Colonic mucosa (tissue), 4 donors: ENCODE measurements at regions of chr4 and their contacts with region 1.

Region 1: DNA sequence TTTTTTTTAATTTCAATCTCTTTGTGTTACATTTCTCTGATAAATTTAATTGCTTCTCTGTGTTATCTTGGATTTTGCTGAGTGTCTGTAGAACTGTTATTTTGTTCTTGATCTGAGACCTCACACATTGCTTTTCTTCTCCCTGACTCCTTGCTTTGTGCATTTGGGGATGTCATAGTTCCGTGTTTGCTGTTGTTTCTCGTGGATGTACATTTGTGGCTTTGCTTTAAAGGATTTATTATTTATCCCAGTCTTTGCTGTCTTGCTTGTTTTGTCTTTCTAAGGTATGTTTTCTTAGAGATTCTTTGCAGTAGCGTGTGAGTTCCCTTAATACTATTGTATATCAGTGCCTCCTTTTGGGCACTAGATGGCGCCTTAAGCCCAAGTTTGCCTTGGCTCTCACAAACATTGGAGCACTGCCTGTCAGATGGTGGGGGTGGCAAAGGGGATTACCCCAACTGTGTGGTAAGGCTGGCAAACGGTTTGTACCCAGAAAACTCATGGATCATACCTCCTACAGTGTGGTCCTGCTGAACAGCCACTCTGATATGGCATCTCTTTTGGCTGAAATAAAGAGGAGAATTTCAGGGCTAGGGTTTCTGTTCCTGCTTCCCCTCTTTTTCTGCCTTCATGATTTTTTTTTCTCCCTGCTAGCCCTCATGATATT is 96.4 kb downstream of the PGRMC2 start:
- DNase-seq: peak; percentile 65
- H3K4me3 ChIP-seq: no peak overlapping the region
- H3K27ac ChIP-seq: no peak overlapping the region
- H3K4me1 ChIP-seq: no peaks in the 10 kb centered on the region
- H3K27me3 ChIP-seq: no peaks in the 10 kb centered on the region
- CTCF ChIP-seq: peak; percentile 81

Region 2: DNA sequence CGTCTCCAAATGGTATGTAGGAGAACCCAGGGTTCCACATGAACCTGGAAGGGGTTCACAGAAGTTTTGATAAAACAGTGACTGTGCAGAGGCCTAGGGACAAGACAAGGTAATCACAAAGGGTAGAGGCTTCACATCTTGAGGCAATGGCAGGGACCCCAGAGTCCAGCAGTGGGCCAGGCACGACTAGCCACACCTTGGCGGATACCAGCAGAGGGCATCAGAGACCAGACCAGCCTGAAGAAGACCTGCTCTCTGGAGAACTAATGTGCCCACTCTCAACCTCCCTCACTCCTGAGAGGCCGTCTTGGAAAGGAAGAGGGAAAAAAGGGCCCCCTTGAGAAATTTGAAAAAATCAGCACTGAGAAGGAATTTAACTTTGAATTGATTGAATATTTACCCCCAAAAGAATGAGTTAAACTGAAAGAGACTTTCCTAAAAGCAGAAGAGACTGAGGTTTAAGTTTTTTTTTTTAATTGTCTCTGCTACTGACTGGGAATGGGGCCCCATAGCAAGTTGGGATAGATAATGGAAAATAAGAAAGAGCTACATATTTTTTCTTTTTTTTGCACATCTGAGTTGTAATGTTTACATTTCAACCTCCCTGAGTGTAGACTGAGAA is 374.4 kb after region 1 on chr4:
- intact Hi-C with region 1: loop called (anchors 10 kb)
- DNase-seq: peak; percentile 52
- H3K4me3 ChIP-seq: no peak overlapping the region
- H3K27ac ChIP-seq: no peak overlapping the region
- H3K4me1 ChIP-seq: no peaks in the 10 kb centered on the region
- H3K27me3 ChIP-seq: no peaks in the 10 kb centered on the region
- CTCF ChIP-seq: peak; percentile 45